ENCODE measurements at regions of chr13 and their contacts with region 1.

Region 1: DNA sequence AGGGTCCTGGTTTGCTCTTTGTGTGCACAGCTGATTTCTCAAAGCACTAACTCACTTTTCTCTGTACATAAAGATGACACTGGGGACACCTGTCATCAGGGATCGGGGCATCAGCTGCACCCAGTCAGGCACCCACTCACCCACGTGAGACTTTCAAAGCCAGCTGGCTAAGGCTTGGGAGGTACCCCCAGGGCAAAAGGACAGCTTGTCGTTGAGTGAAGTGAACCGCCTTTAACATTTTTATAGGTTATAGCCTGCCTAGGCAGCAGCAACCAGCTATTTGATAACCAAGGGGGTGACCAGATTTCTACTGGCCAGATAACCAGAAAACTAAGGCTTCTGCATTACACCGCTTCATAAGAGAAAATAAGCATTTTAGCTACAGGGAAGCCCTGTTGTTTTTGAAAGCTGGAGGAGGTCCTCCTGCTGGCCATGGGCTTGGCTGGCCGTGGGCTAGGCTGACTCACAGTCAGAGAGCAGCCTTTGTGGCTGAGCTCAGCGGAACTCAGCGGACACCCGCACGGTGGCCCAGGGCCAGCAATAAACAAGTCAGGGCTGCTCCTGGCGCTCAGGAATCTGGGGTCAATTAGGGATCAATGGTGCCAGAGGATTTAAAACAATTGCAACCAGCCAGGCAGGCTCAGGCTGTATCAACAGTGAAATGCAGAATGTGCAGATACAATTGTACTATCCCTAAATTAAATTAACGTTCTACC is 57.1 kb downstream of the ALOX5AP start:
- DNase-seq: peak; percentile 91
- H3K4me3 ChIP-seq: no peak overlapping the region
- H3K27ac ChIP-seq: peak overlapping the region; percentile 13
- H3K4me1 ChIP-seq: peaks cover 40% of the 10 kb centered on the region
- H3K27me3 ChIP-seq: no peaks in the 10 kb centered on the region
- CTCF ChIP-seq: peak; percentile 1 to 57

Region 2: DNA sequence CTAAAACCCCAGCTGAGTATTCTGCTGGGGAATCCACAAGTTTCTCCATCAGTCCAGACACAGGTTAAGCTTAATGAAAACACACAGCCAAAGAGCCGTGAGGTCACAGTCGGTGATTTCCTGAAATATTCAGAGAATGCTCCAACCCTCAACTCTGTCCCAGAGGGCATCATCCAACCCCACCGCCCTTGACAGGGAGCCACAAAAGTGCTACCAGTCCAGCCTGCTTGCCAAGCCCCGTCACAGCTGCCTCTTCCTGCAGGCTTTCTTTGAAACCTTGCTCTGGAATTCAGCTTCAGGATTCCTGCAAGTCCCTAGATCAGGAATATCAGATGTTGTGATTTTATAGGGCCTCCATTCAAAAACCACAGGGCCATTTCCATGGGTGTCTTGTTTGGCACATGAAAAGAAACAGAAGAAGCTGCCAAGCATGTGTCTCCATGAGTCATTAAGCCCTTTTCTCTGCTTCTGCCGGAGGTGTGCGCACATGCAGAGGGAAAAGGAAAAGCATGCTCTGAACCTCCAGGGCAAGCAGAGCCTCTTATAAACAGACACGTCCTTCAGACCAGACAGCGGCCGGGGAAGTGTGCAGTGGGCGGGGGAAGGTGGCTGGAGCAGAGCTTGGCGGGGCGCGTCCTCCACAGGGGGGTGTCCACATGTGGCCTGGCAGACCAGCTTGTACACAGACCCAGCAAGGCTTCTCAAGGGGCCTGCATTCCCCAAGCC is 649.8 kb before region 1 on chr13:
- CTCF ChIA-PET with region 1: interaction called, 3 read pairs
- dilution Hi-C with region 1: loop called (anchors 5 kb)
- in situ Hi-C with region 1: no loop called
- intact Hi-C with region 1: no loop called
- DNase-seq: peak; percentile 95
- H3K4me3 ChIP-seq: no peak overlapping the region
- H3K27ac ChIP-seq: peak overlapping the region; percentile 40
- H3K4me1 ChIP-seq: peaks cover 24% of the 10 kb centered on the region
- H3K27me3 ChIP-seq: no peaks in the 10 kb centered on the region
- CTCF ChIP-seq: no peak

Region 3: DNA sequence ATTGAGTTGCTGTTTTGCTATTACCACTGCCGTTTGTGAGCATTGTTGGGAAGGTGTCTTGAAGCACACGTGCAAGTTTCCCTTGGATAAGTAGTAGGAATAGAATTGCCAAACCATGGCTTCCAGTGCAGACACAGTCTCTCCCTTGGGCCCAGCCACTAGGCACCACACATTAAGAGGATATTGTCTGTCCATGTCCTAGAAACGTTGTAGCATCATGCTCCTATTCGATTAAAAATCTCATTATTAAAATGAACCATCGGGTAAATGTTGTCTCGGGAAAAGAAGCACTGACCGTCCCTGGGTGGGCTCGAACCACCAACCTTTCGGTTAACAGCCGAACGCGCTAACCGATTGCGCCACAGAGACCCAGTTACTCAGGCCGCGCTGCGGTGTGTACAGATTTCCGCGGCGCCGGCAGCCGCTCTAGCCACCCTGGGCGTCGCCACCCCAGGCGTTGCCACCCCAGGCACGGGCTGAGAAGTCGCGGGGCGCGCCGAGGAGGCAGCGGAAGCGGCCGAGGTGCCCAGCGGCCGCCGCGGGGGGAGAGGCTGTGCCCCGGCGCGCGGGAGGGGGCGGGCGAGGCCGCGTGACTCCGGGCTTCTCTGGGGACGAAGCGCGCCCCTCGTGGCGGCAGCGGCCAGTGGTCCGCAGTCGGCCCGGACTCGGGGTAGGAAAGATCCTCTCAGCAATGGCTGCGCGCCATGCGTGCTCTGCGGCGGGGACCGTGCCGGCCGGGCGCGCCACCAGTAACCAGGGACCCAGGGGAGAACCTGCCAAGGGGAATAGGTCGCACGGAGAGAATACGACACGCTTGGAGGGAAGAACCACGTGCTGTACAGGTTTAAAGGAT is 118.5 kb before region 1 on chr13:
- CTCF ChIA-PET with region 1: no interaction called
- dilution Hi-C with region 1: loop called (anchors 10 kb)
- in situ Hi-C with region 1: loop called in 1 of 2 experiments (anchors 5 kb)
- intact Hi-C with region 1: loop called (anchors 1 kb)
- DNase-seq: peak; percentile 81
- H3K4me3 ChIP-seq: peak overlapping the region; percentile 23 to 56 (median 52)
- H3K27ac ChIP-seq: no peak overlapping the region
- H3K4me1 ChIP-seq: peaks cover 9% of the 10 kb centered on the region
- H3K27me3 ChIP-seq: no peaks in the 10 kb centered on the region
- CTCF ChIP-seq: peak; percentile 37 to 49

Region 4: GRCh38 chr13:30679483-30680330 is 112.7 kb before region 1 on chr13:
- CTCF ChIA-PET with region 1: no interaction called
- dilution Hi-C with region 1: loop called (anchors 10 kb)
- in situ Hi-C with region 1: loop called in 1 of 2 experiments (anchors 5 kb)
- intact Hi-C with region 1: loop called (anchors 1 kb)
- DNase-seq: no peak
- H3K4me3 ChIP-seq: no peak overlapping the region
- H3K27ac ChIP-seq: no peak overlapping the region
- H3K4me1 ChIP-seq: no peaks in the 10 kb centered on the region
- H3K27me3 ChIP-seq: no peaks in the 10 kb centered on the region
- CTCF ChIP-seq: peak; percentile 47 to 78

Region 5: DNA sequence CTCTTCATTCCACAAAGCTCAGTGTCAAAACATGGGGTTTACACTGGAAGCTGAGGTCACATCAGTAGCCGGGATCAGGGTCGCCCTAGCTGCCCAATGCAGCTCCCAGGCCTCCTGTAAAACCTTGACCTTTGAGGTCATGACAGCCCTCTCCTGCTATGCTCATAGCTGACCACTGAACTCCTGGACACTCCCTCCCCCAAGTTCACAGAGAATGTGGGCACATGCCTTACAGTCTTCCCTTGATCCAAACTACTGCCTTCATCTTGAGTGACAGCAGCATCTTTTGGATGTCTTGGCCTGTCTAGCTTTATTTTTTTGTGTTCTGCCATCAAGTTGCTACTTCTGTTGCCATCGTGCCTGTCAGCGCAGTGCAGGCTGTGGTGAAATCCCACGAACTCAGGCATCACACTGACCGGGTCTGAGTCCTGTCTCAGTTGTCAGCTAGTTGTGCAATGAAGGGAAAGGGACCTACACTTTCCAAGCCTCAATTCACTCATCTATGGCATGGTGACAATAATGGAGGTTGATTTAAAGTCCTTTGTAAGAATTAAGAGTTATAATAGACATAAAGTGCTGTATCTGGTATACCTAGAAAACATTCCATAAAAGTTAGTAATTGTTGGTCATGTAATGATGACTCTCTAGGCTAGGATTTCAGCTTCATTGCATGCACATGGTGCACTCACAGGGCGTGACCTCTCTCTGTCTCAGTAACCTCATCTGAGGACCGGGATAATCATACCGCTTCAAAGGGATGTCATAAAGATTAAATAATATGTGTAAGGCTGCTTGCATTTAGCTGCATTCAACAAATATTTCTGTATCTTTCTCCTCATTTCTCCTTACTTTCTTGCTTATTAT is 73.5 kb before region 1 on chr13:
- CTCF ChIA-PET with region 1: no interaction called
- dilution Hi-C with region 1: no loop called
- in situ Hi-C with region 1: no loop called
- intact Hi-C with region 1: loop called (anchors 2 kb)
- DNase-seq: peak; percentile 85
- H3K4me3 ChIP-seq: no peak overlapping the region
- H3K27ac ChIP-seq: peak overlapping the region; percentile 44
- H3K4me1 ChIP-seq: peaks cover 19% of the 10 kb centered on the region
- H3K27me3 ChIP-seq: no peaks in the 10 kb centered on the region
- CTCF ChIP-seq: no peak

Region 6: GRCh38 chr13:30739761-30740642 is 52.4 kb before region 1 on chr13:
- CTCF ChIA-PET with region 1: no interaction called
- dilution Hi-C with region 1: no loop called
- in situ Hi-C with region 1: loop called in 1 of 2 experiments (anchors 5 kb)
- intact Hi-C with region 1: loop called (anchors 2 kb)
- DNase-seq: peak; percentile 92
- H3K4me3 ChIP-seq: no peak overlapping the region
- H3K27ac ChIP-seq: peak overlapping the region; percentile 54
- H3K4me1 ChIP-seq: peaks cover 45% of the 10 kb centered on the region
- H3K27me3 ChIP-seq: no peaks in the 10 kb centered on the region
- CTCF ChIP-seq: no peak

Measured in mammary epithelial cell (primary cell).